ENCODE measurements at regions of chr1 and their contacts with region 1.

Region 1: GRCh38 chr1:244705261-244706234 is 52.6 kb downstream of the DESI2 start:
- DNase-seq: no peak
- H3K4me3 ChIP-seq: no peak overlapping the region
- H3K27ac ChIP-seq: no peak overlapping the region
- H3K4me1 ChIP-seq: no peaks in the 10 kb centered on the region
- H3K27me3 ChIP-seq: no peaks in the 10 kb centered on the region
- CTCF ChIP-seq: no peak
- POLR2A ChIP-seq: no peak

Region 2: DNA sequence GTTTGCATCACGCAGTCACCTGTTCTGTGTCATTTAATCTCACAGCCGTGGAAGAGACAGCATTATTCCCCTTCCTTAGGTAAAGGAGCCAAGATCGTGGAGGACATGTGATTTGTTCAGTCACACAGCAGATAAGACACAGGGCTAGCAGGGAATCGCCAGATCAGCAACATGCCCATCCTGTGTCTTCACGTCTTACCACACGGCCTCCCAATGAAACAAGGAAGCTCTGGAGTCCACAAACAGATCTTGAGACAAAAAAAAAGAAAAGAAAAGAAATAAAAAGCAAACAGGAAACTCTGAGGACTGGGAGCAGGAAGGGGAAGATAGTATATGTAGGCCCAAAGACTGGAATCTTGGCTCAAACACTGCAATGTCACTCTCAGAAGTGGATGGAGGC is 409.1 kb before region 1 on chr1:
- intact Hi-C with region 1: loop called (anchors 5 kb)
- DNase-seq: no peak
- H3K4me3 ChIP-seq: no peak overlapping the region
- H3K27ac ChIP-seq: no peak overlapping the region
- H3K4me1 ChIP-seq: no peaks in the 10 kb centered on the region
- H3K27me3 ChIP-seq: no peaks in the 10 kb centered on the region
- CTCF ChIP-seq: no peak
- POLR2A ChIP-seq: no peak

Region 3: GRCh38 chr1:244778361-244778760 is 72.8 kb after region 1 on chr1:
- intact Hi-C with region 1: no loop called
- DNase-seq: no peak
- H3K4me3 ChIP-seq: no peak overlapping the region
- H3K27ac ChIP-seq: no peak overlapping the region
- H3K4me1 ChIP-seq: no peaks in the 10 kb centered on the region
- H3K27me3 ChIP-seq: no peaks in the 10 kb centered on the region
- CTCF ChIP-seq: no peak
- POLR2A ChIP-seq: no peak